ENCODE measurements at regions of chr18 and their contacts with region 1.

Region 1: GRCh38 chr18:28189400-28190239 is 12.7 kb upstream of the CDH2 start:
- DNase-seq: peak; percentile 73
- H3K4me3 ChIP-seq: no peak overlapping the region
- H3K27ac ChIP-seq: no peak overlapping the region
- H3K4me1 ChIP-seq: no peaks in the 10 kb centered on the region
- H3K27me3 ChIP-seq: no peaks in the 10 kb centered on the region
- CTCF ChIP-seq: peak; percentile 67
- POLR2A ChIP-seq: no peak

Region 2: DNA sequence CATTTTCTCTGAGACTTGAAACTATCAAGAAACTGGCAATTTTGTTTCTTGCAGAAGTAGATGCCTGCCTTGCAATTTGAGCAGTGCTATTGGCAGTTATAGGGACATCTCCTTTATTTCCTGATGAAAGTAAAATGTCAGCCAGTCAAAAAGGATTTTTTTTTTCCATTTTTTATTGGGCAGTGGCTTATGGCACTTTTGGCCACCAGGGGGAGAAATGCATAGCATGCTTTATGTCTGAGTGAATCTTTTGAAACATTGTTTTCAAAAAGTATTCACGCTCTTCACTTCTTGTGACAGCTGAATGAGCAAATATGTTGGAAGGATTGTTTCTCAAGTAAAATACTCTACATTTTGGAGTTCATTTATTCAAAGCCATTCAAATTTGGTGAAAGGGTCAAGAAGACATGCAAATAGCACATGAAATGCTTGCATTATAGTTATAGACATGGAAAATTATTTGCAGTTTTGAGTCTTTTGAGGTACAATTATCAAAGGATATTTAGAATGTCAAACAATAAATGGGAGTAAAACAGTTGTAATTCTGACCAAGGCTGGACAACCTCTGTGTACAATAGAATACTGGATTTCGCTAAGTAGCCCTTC is 503.7 kb before region 1 on chr18:
- CTCF ChIA-PET with region 1: interaction called, 5 read pairs
- POLR2A ChIA-PET with region 1: no interaction called
- dilution Hi-C with region 1: no loop called
- intact Hi-C with region 1: loop called (anchors 1 kb)
- DNase-seq: peak; percentile 40
- H3K4me3 ChIP-seq: no peak overlapping the region
- H3K27ac ChIP-seq: no peak overlapping the region
- H3K4me1 ChIP-seq: no peaks in the 10 kb centered on the region
- H3K27me3 ChIP-seq: no peaks in the 10 kb centered on the region
- CTCF ChIP-seq: peak; percentile 58
- POLR2A ChIP-seq: no peak

Region 3: GRCh38 chr18:27778441-27778840 is 411.2 kb before region 1 on chr18:
- CTCF ChIA-PET with region 1: no interaction called
- POLR2A ChIA-PET with region 1: no interaction called
- dilution Hi-C with region 1: no loop called
- intact Hi-C with region 1: loop called (anchors 1 kb)
- DNase-seq: peak; percentile 32
- H3K4me3 ChIP-seq: no peak overlapping the region
- H3K27ac ChIP-seq: no peak overlapping the region
- H3K4me1 ChIP-seq: no peaks in the 10 kb centered on the region
- H3K27me3 ChIP-seq: peaks cover 1 to 8% of the 10 kb centered on the region in 2 experiments
- CTCF ChIP-seq: peak; percentile 11 to 42
- POLR2A ChIP-seq: no peak

Region 4: GRCh38 chr18:27931535-27931934 is 258.1 kb before region 1 on chr18:
- CTCF ChIA-PET with region 1: no interaction called
- POLR2A ChIA-PET with region 1: no interaction called
- dilution Hi-C with region 1: no loop called
- intact Hi-C with region 1: no loop called
- DNase-seq: no peak
- H3K4me3 ChIP-seq: no peak overlapping the region
- H3K27ac ChIP-seq: no peak overlapping the region
- H3K4me1 ChIP-seq: peaks cover 3% of the 10 kb centered on the region
- H3K27me3 ChIP-seq: no peaks in the 10 kb centered on the region
- CTCF ChIP-seq: no peak
- POLR2A ChIP-seq: no peak

Region 5: GRCh38 chr18:29171892-29172755 is 982.5 kb after region 1 on chr18:
- CTCF ChIA-PET with region 1: no interaction called
- POLR2A ChIA-PET with region 1: no interaction called
- dilution Hi-C with region 1: no loop called
- intact Hi-C with region 1: no loop called
- DNase-seq: no peak
- H3K4me3 ChIP-seq: no peak overlapping the region
- H3K27ac ChIP-seq: no peak overlapping the region
- H3K4me1 ChIP-seq: no peaks in the 10 kb centered on the region
- H3K27me3 ChIP-seq: no peaks in the 10 kb centered on the region
- CTCF ChIP-seq: no peak
- POLR2A ChIP-seq: no peak